ENCODE measurements at regions of chr14 and their contacts with region 1.

Region 1: DNA sequence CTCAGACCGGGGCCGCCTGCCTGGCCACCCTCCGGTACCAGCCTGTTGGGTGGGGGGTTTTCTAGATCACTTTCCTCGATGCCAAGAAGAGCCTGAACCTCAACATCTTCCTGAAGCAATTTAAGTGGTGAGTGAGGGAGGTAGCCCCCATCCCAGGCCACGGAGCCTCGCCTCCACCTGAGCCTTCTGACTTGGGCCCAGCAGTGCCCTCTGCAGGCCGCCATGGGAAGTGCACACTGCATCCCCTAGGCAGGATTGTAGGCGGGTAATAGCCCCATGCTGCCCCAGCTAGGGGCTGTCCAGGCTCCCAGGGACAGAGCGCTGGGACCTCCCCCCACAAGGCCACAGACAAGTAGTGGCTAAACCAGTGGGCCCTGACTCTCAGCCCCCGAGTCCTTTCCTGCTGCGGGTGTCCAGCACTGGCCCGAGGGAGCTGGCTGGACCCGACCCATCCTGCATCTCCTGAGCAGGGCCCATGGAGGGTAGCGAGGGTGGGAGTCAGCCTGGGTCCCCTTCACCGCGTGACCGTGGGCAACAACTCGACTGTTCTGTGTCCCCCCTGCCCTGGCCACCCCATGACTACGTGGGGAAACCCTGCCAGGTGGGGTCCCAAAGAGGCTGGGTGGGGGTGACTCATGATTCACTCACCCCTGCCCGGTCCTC is 15.3 kb upstream of the ADSS1 start:
- DNase-seq: peak; percentile 79
- ATAC-seq: peak; percentile 82
- H3K4me3 Mint-ChIP-seq: no peak overlapping the region
- H3K27ac Mint-ChIP-seq: no peak overlapping the region
- H3K4me1 Mint-ChIP-seq: no peaks in the 10 kb centered on the region
- H3K27me3 Mint-ChIP-seq: no peaks in the 10 kb centered on the region

Region 2: DNA sequence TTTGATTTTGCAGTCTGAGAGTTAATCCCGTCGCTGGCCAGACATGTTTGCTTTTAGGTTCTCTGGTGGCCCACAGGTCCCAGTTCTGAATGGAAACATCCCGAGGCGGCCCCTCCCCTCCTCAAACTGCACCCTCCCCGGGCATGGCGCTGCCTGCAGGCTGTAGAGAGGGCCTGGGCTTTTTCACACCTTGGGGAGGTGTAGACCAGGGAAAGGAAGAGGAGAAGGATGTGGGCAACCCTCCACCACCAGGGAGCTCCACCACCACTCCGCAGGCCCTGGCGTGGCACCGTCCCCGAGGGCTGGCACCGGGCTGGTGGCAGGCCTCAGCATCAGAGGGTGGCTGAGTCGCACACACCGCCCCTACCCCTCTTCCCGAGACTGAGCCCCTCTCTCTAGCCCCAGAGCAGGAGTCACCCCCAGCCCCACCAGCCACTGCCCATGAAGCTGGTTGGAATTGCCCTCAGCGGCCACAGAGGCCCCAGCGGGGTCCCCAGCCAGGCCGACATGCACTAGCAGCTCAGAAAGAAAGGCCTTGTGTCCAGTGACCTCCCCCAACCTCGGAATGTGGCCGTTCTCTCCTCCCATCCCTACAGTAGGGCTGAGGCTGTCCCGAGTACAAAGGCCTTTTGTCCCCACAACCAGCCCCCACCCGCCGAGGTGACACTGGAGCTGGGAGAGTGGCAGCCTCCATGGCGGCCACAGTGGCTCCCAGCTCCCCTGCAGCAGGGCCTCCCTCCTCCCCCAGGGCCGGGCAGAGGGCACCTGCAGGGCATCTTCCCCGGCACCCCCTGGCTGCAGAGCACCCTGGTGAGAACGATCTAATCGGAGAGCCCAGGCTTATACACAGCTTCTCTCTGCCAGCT is 42.8 kb before region 1 on chr14:
- CTCF ChIA-PET with region 1: interaction called, 15 read pairs
- DNase-seq: peak; percentile 64
- ATAC-seq: peak; percentile 83
- H3K4me3 Mint-ChIP-seq: no peak overlapping the region
- H3K27ac Mint-ChIP-seq: no peak overlapping the region
- H3K4me1 Mint-ChIP-seq: peaks cover 15% of the 10 kb centered on the region
- H3K27me3 Mint-ChIP-seq: peaks cover 49% of the 10 kb centered on the region